GM23248 (cell line): ENCODE measurements at regions of chr1 and their contacts with region 1.

Region 1: DNA sequence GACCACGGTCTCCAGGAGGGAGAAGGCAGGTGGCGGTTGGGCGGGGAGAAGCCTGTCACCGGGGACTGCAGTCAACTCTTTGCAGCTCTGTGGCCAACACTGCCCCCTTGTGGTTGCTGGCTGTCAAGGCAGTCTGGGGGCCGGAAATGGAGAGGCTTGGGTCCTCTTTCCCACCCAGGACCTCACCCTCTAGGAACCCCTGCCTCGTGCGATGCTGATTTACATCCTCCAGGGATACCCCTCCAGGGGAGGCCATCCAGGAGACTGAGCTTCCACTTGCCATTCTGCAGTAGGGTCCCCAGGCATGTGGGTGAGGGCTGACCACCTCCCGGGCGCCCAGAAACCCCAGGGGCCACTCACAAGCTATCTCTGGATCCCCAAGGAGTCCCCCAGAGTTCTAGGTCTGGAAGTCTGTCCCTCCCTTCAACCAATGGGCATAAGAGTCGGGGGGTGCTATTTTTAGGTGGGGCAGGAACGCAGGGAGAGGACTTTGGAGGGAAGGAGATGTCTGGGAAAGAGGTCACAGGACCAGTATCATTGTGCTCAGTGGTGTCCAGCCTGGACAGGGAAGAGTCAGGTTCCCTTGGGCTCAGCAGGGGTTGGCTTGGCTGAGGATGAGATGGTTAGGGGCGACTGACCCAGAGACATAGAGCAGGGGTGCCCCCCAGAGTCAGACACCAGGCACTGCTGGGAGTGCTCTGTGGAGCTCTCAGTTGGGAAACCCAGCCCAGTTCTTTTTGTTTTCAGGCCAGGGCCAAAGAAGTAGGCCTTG is 7.1 kb upstream of the GPR61 start:
- DNase-seq: peak; percentile 89
- H3K4me3 ChIP-seq: peak overlapping the region; percentile 61
- H3K27ac ChIP-seq: 0 out of 2 replicates have a peak overlapping the region, but pooled peaks have one; percentile 16
- H3K4me1 ChIP-seq: peaks cover 4% of the 10 kb centered on the region
- H3K27me3 ChIP-seq: no peaks in the 10 kb centered on the region

Region 2: GRCh38 chr1:109263597-109264398 is 268.8 kb before region 1 on chr1:
- in situ Hi-C with region 1: loop called (anchors 10 kb)
- DNase-seq: peak; percentile 86
- H3K4me3 ChIP-seq: no peak overlapping the region
- H3K27ac ChIP-seq: no peak overlapping the region
- H3K4me1 ChIP-seq: no peaks in the 10 kb centered on the region
- H3K27me3 ChIP-seq: no peaks in the 10 kb centered on the region

Region 3: DNA sequence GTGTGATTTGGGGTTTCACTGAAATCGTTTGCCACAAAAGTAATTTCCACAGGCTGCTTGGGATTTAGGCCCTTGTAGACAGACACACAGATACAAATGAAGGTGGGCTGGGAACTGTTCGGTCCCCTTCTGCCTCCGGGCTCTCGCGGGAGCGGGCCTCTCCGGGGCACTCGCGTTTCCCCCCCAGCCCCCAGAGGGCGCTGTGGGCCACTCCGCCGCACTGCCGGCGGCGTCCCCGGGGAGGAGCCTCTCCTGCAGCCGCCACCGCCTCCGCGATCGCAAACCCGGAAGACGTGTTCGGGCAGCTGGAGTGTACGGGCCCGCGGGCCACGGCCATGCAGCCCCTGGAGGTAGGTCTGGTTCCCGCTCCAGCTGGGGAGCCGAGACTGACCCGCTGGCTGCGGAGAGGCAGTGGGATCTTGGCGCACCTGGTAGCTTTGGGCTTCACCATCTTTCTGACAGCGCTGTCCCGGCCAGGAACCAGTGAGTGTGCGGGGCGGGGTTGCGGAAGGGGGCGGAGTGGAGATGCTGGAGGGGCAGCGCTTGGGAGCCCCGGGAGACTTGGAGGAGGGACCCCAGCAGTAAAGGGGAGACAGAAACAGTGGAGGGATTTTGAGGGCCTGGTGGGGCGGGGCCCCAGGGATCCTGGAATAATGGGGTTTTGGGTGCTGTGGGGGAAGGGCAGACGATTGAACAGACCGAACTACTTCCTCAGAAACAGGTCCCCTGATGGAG is 38.6 kb before region 1 on chr1 and contains the start of gene CYB561D1:
- in situ Hi-C with region 1: loop called (anchors 5 kb)
- DNase-seq: peak; percentile 93
- H3K4me3 ChIP-seq: peak within 1 kb of the TSS; percentile 93
- H3K27ac ChIP-seq: peak within 1 kb of the TSS; percentile 25; the same call in 1 of the 2 replicates
- H3K4me1 ChIP-seq: peaks cover 5% of the 10 kb centered on the region
- H3K27me3 ChIP-seq: no peaks in the 10 kb centered on the region
- total RNA-seq, gene CYB561D1: 9.5 and 9.6 TPM in 2 replicates